Activated T-helper 2 cell treated with anti-CD3 and anti-CD28 coated beads, Interferon-gamma antibody, Interleukin-2, Interleukin-4, amounts not matched to agents 10 μg/mL and 5 μg/mL and 100 μg/mL, durations not matched to agents 14 hours and 24 hours and 36 hours (primary cell): ENCODE measurements at regions of chr13 and their contacts with region 1.

Region 1: GRCh38 chr13:46126552-46127357 is 21.9 kb upstream of the CPB2 start:
- DNase-seq: peak; percentile 54
- H3K4me3 Mint-ChIP-seq: no peak overlapping the region
- H3K27ac Mint-ChIP-seq: peak overlapping the region; percentile 34
- H3K4me1 Mint-ChIP-seq: peaks cover 28% of the 10 kb centered on the region
- H3K27me3 Mint-ChIP-seq: no peaks in the 10 kb centered on the region

Region 2: DNA sequence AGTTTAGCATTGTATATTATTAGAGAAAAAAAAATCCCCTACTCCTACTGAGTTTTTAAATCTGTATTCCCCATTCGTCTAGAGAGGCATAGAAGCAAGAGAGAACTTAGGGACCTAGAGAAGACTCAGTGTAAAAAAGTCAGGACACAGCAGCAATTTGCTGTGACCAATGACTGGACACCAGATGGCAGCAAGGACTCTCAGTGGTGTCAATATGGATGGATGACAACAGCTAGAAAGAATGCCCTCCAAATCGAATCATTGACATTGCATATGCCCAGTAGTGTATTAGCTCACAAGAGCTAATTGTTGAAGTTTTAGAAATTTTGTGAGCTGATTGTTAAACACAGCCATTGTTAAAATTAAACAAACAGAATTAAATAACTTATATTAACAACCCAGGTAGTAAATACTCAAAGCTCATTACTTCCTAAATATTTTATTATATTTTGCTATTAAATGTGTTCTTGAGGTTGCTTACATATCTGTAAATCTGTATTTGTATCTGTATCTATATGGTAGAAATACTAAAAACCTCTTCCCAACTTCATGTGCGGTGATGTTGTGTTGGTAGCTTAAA is 319.1 kb before region 1 on chr13:
- intact Hi-C with region 1: loop called (anchors 10 kb)
- DNase-seq: no peak
- H3K4me3 Mint-ChIP-seq: no peak overlapping the region
- H3K27ac Mint-ChIP-seq: no peak overlapping the region
- H3K4me1 Mint-ChIP-seq: peaks cover 4% of the 10 kb centered on the region
- H3K27me3 Mint-ChIP-seq: peaks cover 8% of the 10 kb centered on the region